AG04449 (cell line): ENCODE measurements at regions of chr1 and their contacts with region 1.

Region 1: GRCh38 chr1:151934048-151934493 is 24.8 kb upstream of the THEM4 start:
- DNase-seq: no peak
- H3K4me3 ChIP-seq: no peak overlapping the region
- CTCF ChIP-seq: peak; percentile 75

Region 2: GRCh38 chr1:151858030-151858691 is 75.9 kb before region 1 on chr1:
- CTCF ChIA-PET with region 1: no interaction called
- POLR2A ChIA-PET with region 1: no interaction called
- DNase-seq: no peak
- H3K4me3 ChIP-seq: no peak overlapping the region
- CTCF ChIP-seq: no peak

Region 3: DNA sequence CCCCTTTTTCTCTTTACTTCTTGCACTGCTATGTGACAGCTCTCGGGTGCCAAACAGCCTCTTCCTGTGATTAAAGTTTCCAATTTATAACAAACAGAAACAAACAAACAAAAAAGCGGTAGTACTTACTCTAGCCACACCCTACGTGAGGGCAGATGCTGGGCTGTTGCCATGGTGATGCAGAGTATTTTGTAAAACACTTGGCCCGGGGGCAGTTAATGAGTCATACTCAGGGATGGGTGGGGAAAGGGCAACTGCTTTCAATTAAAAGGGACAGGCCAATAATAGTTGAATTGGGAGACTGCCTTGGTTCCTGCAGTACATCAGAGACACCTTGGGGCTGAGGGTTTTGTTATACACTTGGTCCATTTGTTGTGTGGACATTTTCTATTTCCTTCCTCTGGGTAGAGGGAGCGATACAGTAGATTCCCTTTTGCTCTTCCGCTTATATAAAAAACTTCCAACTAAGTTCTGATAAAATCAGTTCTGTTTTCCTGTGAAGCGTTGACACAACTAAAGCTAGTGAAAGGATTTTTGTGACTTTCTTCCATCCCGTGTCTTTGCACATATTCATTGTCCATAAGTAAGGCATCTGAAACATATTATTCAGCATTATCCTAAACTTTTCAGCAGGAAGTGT is 11.8 kb after region 1 on chr1:
- CTCF ChIA-PET with region 1: interaction called, 36 read pairs
- POLR2A ChIA-PET with region 1: no interaction called
- DNase-seq: peak; percentile 62
- H3K4me3 ChIP-seq: no peak overlapping the region
- CTCF ChIP-seq: no peak

Region 4: DNA sequence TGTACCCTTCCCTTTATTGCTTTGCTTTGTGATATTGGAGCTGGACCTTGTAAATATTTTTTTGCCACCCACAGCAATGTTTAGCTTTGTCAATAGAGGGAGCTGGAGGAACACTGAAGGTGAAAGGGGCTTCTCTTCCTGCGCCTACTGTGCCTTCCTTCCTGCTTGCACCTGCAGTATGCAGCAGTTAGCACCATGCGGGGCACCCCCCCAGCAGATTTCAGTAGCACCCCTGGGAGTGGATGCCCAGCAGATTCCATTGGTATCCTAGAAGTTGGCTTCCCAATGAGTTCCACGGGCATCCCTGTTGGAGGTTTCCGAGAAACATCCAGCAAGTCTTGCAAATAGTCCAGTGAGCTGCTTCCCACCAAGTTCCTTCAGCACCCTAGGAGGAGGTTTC is 34.0 kb after region 1 on chr1:
- CTCF ChIA-PET with region 1: interaction called, 66 read pairs
- POLR2A ChIA-PET with region 1: interaction called, 3 read pairs
- DNase-seq: no peak
- H3K4me3 ChIP-seq: no peak overlapping the region
- CTCF ChIP-seq: peak; percentile 66

Region 5: DNA sequence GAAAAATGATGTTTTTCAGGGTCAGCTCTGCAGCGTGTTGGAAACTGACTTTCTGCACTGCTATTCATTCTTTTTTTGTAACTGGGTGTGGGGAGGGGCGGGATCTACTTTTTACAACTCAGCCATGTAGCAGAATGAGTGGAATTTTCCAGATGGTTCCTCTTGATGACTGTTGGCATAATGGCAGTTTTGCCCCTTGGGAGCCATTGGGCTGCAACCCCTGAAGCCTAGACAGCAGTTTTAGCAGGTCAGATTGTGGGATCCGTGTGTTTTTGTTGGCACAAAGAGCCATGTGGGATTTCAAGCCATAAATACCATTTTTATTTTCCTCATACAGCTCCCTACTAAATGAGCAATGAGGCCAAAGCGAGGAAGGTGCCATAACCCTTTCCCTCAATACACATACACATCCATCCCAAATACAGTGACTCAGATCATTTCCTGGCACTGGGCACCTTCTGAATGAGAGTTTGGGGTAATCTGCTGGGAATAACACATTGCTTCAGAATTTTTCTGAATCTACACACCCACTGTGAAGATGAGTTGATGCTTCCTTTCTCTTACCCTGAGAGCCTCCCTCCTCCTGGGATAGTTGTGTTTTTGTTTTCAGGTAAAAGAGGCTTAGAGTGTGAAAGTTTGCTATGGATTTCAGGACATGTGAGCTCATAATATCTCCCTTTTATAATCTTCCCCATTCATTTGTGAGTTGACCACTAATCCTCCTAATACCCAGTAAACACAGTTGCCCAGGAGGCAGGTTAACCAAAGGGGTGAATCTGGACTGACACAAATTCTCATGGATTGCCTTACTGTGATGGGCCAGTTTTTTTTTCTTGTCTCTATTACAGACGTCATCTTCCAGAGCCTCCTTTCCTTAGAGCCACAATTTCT is 46.5 kb after region 1 on chr1:
- CTCF ChIA-PET with region 1: interaction called, 10 read pairs
- POLR2A ChIA-PET with region 1: no interaction called
- DNase-seq: peak; percentile 84
- H3K4me3 ChIP-seq: no peak overlapping the region
- CTCF ChIP-seq: no peak

Region 6: DNA sequence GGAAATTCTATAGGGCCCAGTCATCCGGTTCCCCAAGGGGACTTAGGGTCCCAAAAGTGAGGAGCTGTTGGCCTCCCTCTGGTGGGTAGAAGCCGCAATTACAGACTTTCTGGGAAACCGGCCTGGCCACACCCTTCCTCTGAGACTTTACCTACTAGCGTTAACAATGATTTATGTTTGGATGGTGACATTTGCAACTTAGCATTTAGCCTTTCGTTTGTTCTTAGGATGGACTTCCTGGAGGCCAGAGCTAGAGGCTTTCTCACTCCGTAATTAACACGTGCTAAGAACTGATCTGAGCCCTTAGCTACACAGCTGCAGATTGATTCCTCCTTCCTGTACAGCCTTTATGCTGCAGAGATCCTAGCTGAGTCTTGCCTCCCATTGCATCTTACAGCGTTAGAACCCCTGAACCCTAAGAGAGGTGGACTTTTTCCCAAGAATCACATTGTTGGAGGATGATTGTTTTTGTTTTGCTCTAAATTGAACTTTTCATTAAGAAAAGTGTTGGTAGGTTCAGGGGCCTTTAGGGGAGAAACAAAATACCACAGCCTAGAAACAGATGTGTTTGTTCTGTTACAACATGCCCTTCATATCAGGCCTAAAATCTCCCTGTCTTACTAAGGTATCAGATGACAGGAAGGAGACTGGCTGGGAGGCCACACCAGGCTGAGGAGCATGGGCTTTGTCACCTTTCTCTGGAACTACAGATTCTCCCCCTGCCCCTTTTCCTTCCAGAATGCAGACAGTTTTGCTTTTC is 100.8 kb after region 1 on chr1:
- CTCF ChIA-PET with region 1: interaction called, 28 read pairs
- POLR2A ChIA-PET with region 1: no interaction called
- DNase-seq: no peak
- H3K4me3 ChIP-seq: peak overlapping the region; percentile 82
- CTCF ChIP-seq: peak; percentile 58

Region 7: DNA sequence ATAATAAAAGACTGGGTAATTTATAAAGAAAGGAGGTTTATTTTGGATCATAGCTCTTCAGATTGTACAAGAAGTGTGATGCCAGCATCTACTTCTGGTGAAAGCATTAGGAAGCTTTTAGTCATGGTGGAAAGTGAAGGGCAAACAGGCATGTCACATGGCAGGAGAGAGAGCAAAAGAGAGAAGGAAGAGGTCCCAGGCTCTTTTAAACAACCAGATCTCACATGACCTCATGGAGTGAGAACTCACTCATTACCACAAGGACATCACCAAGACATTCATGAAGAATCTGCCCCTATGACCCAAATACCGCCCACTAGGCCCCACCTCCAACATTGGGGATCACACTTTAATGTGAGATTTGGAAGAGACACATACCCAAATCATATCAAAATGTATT is 214.9 kb after region 1 on chr1:
- CTCF ChIA-PET with region 1: no interaction called
- POLR2A ChIA-PET with region 1: no interaction called
- DNase-seq: no peak
- H3K4me3 ChIP-seq: no peak overlapping the region
- CTCF ChIP-seq: no peak